ENCODE measurements at regions of chr2 and their contacts with region 1.

Region 1: DNA sequence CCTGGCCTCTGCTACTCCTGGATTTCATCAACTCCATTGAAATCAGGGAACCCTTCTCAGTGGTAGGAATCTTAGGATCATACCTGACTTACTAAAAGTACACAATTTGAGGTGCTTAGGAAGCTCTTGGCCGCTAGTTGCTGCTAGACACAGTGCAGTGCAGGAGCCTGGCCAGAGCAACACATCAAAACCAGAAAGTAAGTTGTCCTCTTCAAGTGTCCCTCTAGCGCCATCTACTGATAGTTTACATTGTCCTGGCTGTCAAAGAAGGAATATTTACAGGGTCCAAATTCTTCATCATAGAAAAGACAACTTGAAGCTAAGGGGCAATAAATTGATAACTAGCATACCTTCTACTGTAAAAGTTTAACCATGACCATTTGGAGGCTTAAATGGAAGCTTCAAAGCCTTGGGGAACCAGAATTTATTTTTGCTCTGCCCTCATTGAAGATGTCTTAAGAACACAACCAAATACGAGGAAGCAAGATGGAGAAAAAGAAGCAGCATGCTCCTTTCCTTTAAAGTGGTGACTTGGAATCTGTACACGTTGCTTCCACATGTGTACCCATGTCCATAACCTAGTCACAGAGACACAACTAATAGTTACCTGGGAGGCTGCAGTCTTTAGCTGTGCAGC is 889.1 kb upstream of the GCFC2 start:
- DNase-seq: peak; percentile 82 to 85
- H3K4me3 ChIP-seq: no peak overlapping the region
- H3K4me3 Mint-ChIP-seq: no peak overlapping the region
- H3K27ac Mint-ChIP-seq: no peak overlapping the region
- H3K4me1 ChIP-seq: no peaks in the 10 kb centered on the region
- H3K4me1 Mint-ChIP-seq: no peaks in the 10 kb centered on the region
- H3K27me3 ChIP-seq: no peaks in the 10 kb centered on the region; the same call in 1 of the 2 replicates
- H3K27me3 Mint-ChIP-seq: peaks cover 4% of the 10 kb centered on the region
- CTCF ChIP-seq: peak; percentile 74 to 89

Region 2: GRCh38 chr2:75729861-75730260 is 870.0 kb before region 1 on chr2:
- CTCF ChIA-PET with region 1: no interaction called
- POLR2A ChIA-PET with region 1: no interaction called
- intact Hi-C with region 1: loop called (anchors 1 kb)
- DNase-seq: peak in 1 of 2 experiments; percentile 33
- H3K4me3 ChIP-seq: no peak overlapping the region
- H3K4me3 Mint-ChIP-seq: no peak overlapping the region
- H3K27ac Mint-ChIP-seq: no peak overlapping the region
- H3K4me1 ChIP-seq: no peaks in the 10 kb centered on the region
- H3K4me1 Mint-ChIP-seq: no peaks in the 10 kb centered on the region
- H3K27me3 ChIP-seq: no peaks in the 10 kb centered on the region
- H3K27me3 Mint-ChIP-seq: peaks cover 19% of the 10 kb centered on the region
- CTCF ChIP-seq: peak; percentile 40 to 41

Region 3: DNA sequence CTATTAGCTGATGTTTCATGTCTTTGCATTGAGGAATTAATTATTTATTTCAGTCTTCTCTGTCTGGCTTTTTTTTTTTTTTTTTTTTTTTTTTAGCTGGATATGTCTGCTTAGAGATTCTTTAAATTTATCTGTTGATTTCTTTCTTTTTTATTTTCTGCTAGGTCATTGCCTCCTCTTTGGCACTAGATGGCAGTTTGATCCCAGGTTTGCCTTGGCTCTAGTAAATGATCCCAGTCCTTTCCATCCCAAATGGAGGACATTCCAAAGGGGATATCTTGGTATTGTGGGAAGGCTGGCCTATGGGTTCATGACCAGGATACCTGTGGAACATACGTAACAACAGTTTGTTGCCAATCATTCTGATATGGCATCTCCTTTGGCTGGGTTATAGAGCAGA is 549.7 kb before region 1 on chr2:
- CTCF ChIA-PET with region 1: no interaction called
- POLR2A ChIA-PET with region 1: no interaction called
- intact Hi-C with region 1: loop called (anchors 2 kb)
- DNase-seq: no peak
- H3K4me3 ChIP-seq: no peak overlapping the region
- H3K4me3 Mint-ChIP-seq: no peak overlapping the region
- H3K27ac Mint-ChIP-seq: no peak overlapping the region
- H3K4me1 ChIP-seq: no peaks in the 10 kb centered on the region
- H3K4me1 Mint-ChIP-seq: no peaks in the 10 kb centered on the region
- H3K27me3 ChIP-seq: no peaks in the 10 kb centered on the region
- H3K27me3 Mint-ChIP-seq: peaks cover 4% of the 10 kb centered on the region
- CTCF ChIP-seq: no peak